BJ (cell line): ENCODE measurements at regions of chr12 and their contacts with region 1.

Region 1: GRCh38 chr12:85029456-85029855 is 6.6 kb downstream of the TSPAN19 start:
- DNase-seq: no peak
- H3K4me3 ChIP-seq: no peak overlapping the region
- H3K27me3 ChIP-seq: no peaks in the 10 kb centered on the region
- CTCF ChIP-seq: peak; percentile 27; the same call in 1 of the 2 replicates

Region 2: GRCh38 chr12:84874125-84874824 is 155.2 kb before region 1 on chr12:
- CTCF ChIA-PET with region 1: interaction called, 152 read pairs
- POLR2A ChIA-PET with region 1: no interaction called
- DNase-seq: no peak
- H3K4me3 ChIP-seq: no peak overlapping the region
- H3K27me3 ChIP-seq: no peaks in the 10 kb centered on the region
- CTCF ChIP-seq: peak; percentile 59

Region 3: DNA sequence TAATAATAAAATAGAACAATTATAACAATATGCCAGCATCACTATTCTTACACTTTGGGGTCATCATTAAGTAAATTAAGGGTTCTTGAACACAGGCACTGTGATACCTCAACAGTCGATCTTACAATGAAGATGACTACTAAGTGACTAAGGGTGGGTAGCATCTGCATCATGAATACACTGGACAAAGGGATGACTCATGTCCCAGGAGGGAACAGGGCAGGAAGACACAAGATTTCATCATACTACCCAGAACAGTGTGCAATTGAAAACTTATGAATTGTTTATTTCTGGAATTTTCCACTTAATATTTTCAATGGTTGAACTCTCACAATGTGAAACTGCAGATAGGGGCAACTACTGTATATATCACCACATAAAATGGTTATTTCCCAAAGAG is 13.0 kb before region 1 on chr12:
- CTCF ChIA-PET with region 1: interaction called, 10 read pairs
- POLR2A ChIA-PET with region 1: no interaction called
- DNase-seq: peak; percentile 50
- H3K4me3 ChIP-seq: no peak overlapping the region
- H3K27me3 ChIP-seq: no peaks in the 10 kb centered on the region
- CTCF ChIP-seq: no peak

Region 4: GRCh38 chr12:85065837-85066482 is 36.5 kb after region 1 on chr12:
- CTCF ChIA-PET with region 1: no interaction called
- POLR2A ChIA-PET with region 1: no interaction called
- DNase-seq: no peak
- H3K4me3 ChIP-seq: no peak overlapping the region
- H3K27me3 ChIP-seq: no peaks in the 10 kb centered on the region
- CTCF ChIP-seq: no peak